Endothelial cell of umbilical vein (primary cell): ENCODE measurements at regions of chr11 and their contacts with region 1.

Region 1: GRCh38 chr11:7571640-7572000 is 57.8 kb downstream of the PPFIBP2 start:
- DNase-seq: peak; percentile 78
- H3K4me3 ChIP-seq: no peak overlapping the region
- H3K27ac ChIP-seq: no peak overlapping the region
- H3K4me1 ChIP-seq: peaks cover 6% of the 10 kb centered on the region
- H3K27me3 ChIP-seq: peaks cover 32 to 37% of the 10 kb centered on the region in 2 experiments
- CTCF ChIP-seq: peak; percentile 90 to 96
- POLR2A ChIP-seq: no peak

Region 2: GRCh38 chr11:7513234-7514098 is 58.2 kb before region 1 on chr11 and contains the start of gene PPFIBP2:
- CTCF ChIA-PET with region 1: interaction called, 12 read pairs
- POLR2A ChIA-PET with region 1: no interaction called
- dilution Hi-C with region 1: no loop called
- intact Hi-C with region 1: loop called (anchors 1 kb)
- DNase-seq: peak; percentile 63
- H3K4me3 ChIP-seq: peak within 1 kb of the TSS; percentile 43 to 65 (median 52)
- H3K27ac ChIP-seq: no peak within 1 kb of the TSS
- H3K4me1 ChIP-seq: peaks cover 6% of the 10 kb centered on the region
- H3K27me3 ChIP-seq: peaks cover 26 to 32% of the 10 kb centered on the region in 2 experiments
- CTCF ChIP-seq: peak; percentile 61 to 76
- POLR2A ChIP-seq: no peak
- total RNA-seq, gene PPFIBP2: 1.3 and 2.6 TPM in 2 replicates

Region 3: DNA sequence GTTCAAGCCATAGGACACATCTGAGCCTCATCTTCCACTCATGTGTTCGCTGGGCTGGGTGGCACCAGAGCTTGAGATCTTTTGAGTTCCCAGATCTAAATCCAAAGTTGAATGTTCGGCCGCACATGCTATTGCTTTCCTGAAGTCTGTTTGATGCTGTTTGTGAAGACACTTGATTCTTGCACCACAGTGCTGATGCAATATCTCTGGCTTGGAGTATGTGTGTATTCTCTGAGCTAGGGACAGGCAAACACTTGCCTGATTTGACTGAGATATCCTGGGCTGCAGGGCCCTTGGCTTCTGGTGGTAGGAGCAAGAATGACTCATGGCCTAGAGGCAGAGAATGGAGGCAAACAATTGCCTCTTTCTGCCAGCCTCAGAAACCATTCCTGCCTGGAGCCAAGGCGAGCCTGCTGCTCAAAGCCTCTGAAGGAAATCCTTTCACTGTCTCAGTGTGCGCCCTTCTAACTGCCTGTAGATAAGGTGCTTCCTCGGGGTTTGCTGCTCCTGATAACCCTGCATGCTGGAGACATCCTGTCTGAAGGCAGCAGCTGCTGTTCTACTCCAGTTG is 28.7 kb after region 1 on chr11:
- CTCF ChIA-PET with region 1: interaction called, 41 read pairs
- POLR2A ChIA-PET with region 1: no interaction called
- dilution Hi-C with region 1: no loop called
- intact Hi-C with region 1: no loop called
- DNase-seq: peak; percentile 92
- H3K4me3 ChIP-seq: no peak overlapping the region
- H3K27ac ChIP-seq: peak overlapping the region; percentile 52
- H3K4me1 ChIP-seq: peaks cover 36% of the 10 kb centered on the region
- H3K27me3 ChIP-seq: no peaks in the 10 kb centered on the region
- CTCF ChIP-seq: no peak
- POLR2A ChIP-seq: peak; percentile 79

Region 4: DNA sequence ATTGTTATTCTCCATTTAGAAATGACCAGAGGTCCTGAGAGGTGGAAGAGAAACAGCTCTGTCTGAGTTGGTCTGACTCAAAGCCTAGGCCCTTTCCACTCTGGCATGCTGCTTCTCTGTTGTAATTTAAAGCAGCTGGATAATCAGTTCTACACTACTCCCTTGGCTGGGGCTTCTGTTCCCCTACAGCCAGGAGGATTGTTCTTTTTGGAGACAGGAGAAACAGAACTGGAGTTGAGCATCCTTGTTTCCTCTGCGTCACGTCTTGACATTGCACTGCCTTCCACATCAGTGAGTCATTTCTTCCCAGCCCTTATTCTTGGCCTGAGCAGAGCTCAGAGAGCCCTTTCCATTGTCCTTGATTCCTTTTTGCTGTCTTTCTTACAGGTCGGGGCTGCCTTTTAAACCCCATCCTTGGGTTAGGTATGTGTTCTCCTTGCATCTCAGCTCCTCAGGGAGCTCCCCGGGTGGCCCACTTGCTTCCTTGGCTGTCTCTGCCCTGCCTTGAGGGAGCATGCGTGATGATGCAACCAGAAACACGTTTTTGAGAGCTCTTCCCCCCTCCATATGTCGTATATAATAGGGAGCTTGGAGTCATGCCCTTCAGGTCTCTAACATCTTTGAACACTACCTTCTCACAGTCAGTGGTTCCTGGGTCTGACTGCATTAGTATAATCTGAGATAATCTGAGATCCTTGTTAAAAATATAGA is 66.0 kb after region 1 on chr11:
- CTCF ChIA-PET with region 1: interaction called, 34 read pairs
- POLR2A ChIA-PET with region 1: no interaction called
- dilution Hi-C with region 1: no loop called
- intact Hi-C with region 1: no loop called
- DNase-seq: peak; percentile 62
- H3K4me3 ChIP-seq: no peak overlapping the region
- H3K27ac ChIP-seq: peak overlapping the region; percentile 19
- H3K4me1 ChIP-seq: peaks cover 10% of the 10 kb centered on the region
- H3K27me3 ChIP-seq: no peaks in the 10 kb centered on the region
- CTCF ChIP-seq: no peak
- POLR2A ChIP-seq: no peak

Region 5: DNA sequence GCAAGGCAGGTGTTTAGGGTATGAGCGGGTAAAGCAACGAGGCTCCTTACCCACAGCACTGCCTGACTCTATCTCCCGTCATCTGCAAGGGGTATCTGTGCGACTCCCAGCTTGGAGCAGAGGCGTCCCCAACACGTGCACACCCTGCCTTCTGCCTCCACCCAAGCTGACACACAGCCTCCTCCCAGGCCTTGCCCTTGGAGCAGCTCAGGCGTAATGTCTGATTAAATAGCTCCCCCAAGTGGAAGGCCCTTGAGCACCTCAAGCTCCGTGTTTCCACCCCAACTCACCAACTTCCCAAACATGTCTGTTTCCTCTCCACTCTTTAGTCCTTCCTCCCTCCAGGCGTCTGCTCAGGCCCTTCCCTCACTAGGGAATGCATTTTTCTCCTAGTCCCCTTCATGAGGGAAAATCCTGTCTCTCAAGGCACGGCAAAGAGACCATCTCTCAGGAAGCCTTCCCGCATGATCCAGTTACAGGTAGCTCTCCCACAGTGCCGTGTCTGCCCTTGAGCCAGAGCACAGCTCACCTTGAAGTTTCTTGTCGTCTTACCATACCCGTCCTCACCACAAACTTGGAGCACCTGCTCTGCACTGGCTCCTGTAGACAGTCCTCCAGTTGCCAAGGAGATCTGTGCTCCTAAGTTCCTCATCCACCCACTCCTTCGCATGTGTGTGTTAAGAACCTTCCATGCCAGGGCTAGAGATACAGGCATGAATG is 85.8 kb after region 1 on chr11:
- CTCF ChIA-PET with region 1: interaction called, 766 read pairs
- POLR2A ChIA-PET with region 1: interaction called, 11 read pairs
- dilution Hi-C with region 1: no loop called
- intact Hi-C with region 1: loop called (anchors 1 kb)
- DNase-seq: peak; percentile 75
- H3K4me3 ChIP-seq: no peak overlapping the region
- H3K27ac ChIP-seq: no peak overlapping the region
- H3K4me1 ChIP-seq: no peaks in the 10 kb centered on the region
- H3K27me3 ChIP-seq: no peaks in the 10 kb centered on the region
- CTCF ChIP-seq: peak; percentile 64 to 80
- POLR2A ChIP-seq: no peak

Region 6: DNA sequence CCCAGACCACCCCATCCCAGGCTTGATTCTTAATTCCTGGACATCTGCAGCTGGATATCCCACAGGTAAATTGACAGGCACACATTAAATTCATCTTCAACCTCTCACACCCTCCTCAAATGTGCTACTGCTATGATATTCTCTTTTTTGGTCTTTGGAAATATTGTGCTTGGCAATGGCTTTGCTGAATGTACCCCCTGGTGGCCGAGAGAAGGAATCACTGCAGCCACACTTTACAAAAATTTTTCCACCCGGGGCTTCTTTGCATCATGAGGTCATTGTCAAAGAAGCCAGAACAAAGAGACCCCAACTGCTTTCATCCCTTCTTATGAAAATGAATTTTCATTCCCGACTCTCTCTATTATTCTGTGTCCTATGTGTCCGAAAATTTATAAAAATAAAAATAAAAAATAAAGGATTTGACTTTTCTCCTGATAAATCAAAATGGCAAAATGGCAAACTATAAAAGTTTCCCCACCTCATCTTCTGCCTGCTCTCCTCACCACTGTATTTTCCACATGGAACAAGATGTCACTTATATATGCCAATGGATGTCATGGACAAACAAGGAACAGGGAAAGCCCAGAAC is 116.7 kb after region 1 on chr11:
- CTCF ChIA-PET with region 1: interaction called, 23 read pairs
- POLR2A ChIA-PET with region 1: no interaction called
- dilution Hi-C with region 1: no loop called
- intact Hi-C with region 1: loop called (anchors 1 kb)
- DNase-seq: peak; percentile 36
- H3K4me3 ChIP-seq: no peak overlapping the region
- H3K27ac ChIP-seq: no peak overlapping the region
- H3K4me1 ChIP-seq: no peaks in the 10 kb centered on the region
- H3K27me3 ChIP-seq: peaks cover 46 to 50% of the 10 kb centered on the region in 2 experiments
- CTCF ChIP-seq: peak; percentile 72 to 77
- POLR2A ChIP-seq: no peak